Mammary epithelial cell (primary cell): ENCODE measurements at regions of chr5 and their contacts with region 1.

Region 1: DNA sequence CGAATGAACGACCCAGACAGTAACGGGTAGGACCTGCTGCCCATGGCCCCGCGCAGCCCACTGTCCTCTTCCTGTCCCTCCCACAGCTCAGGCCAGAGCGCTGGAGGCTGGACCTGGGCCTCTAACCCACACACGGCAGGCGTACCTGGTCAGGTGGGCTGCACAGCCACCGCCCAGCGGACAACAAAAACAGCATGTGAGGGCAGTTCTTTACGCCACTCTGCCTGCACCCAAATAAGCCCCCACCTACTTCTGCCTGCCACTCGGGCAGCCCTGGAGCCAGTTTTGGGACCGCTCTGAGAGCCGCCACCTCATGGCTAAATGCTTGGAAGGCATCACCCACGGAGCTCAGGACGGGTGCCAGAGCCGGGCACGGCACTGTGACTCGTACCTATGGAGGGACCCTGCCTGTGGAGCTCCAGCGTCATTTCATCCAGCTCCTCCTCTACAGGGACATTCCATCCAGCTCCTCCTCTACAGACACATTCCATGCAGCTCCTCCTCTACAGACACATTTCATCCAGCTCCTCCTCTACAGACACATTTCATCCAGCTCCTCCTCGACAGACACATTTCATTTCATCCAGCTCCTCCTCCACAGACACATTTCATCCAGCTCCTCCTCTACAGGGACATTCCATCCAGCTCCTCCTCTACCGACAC is 18.9 kb downstream of the CLPTM1L start:
- DNase-seq: no peak
- H3K4me3 ChIP-seq: no peak overlapping the region
- H3K27ac ChIP-seq: no peak overlapping the region
- H3K4me1 ChIP-seq: peaks cover 42% of the 10 kb centered on the region
- H3K27me3 ChIP-seq: no peaks in the 10 kb centered on the region
- CTCF ChIP-seq: no peak

Region 2: DNA sequence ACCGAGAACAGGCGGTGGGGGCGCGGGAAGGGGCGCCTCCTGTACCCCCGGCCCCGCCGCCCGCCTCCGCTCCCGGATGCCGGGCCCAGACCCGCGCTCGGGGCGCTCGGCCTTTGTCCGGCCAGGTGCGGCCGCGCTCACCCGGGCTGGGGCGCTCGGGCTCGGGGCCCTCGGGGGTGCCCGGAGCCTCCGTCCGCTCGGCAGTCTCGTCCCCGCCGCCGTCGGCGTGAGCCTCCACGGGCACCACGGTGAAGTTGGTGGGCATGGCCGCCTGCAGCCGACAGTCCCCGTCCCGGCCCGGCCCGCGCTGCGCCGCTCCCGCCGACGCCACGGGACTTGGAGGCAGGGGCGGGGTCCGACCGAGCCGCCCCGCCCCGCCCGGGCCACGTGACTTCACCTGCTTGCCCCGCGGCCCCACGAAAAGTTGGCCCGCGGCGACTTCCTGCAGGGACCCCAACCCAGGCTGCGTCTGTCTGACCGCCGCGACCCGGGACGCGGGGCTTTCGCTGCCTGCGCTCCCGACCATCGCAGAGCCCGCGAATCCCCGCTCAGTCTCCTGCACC is 214.2 kb before region 1 on chr5 and contains the start of gene SLC12A7:
- CTCF ChIA-PET with region 1: no interaction called
- dilution Hi-C with region 1: no loop called
- in situ Hi-C with region 1: no loop called
- intact Hi-C with region 1: loop called (anchors 5 kb)
- DNase-seq: peak; percentile 35
- H3K4me3 ChIP-seq: peak within 1 kb of the TSS; percentile 71 to 88 (median 71)
- H3K27ac ChIP-seq: peak within 1 kb of the TSS; percentile 36
- H3K4me1 ChIP-seq: peaks cover 13% of the 10 kb centered on the region
- H3K27me3 ChIP-seq: no peaks in the 10 kb centered on the region
- CTCF ChIP-seq: no peak
- total RNA-seq, gene SLC12A7: 10.5 to 21.2 TPM

Region 3: GRCh38 chr5:1344975-1345838 is 19.2 kb after region 1 on chr5 and contains the start of gene CLPTM1L:
- CTCF ChIA-PET with region 1: no interaction called
- dilution Hi-C with region 1: no loop called
- in situ Hi-C with region 1: no loop called
- intact Hi-C with region 1: loop called (anchors 2 kb)
- DNase-seq: peak; percentile 81
- H3K4me3 ChIP-seq: peak within 1 kb of the TSS; percentile 80 to 91 (median 87)
- H3K27ac ChIP-seq: peak within 1 kb of the TSS; percentile 78
- H3K4me1 ChIP-seq: peaks cover 18% of the 10 kb centered on the region
- H3K27me3 ChIP-seq: no peaks in the 10 kb centered on the region
- CTCF ChIP-seq: no peak
- total RNA-seq, gene CLPTM1L: 111 to 154 TPM

Region 4: GRCh38 chr5:1385395-1386273 is 59.6 kb after region 1 on chr5:
- CTCF ChIA-PET with region 1: no interaction called
- dilution Hi-C with region 1: no loop called
- in situ Hi-C with region 1: no loop called
- intact Hi-C with region 1: no loop called
- DNase-seq: peak; percentile 33
- H3K4me3 ChIP-seq: peak overlapping the region; percentile 53 to 60 (median 57)
- H3K27ac ChIP-seq: no peak overlapping the region
- H3K4me1 ChIP-seq: peaks cover 14% of the 10 kb centered on the region
- H3K27me3 ChIP-seq: no peaks in the 10 kb centered on the region
- CTCF ChIP-seq: no peak

Region 5: GRCh38 chr5:1511651-1512540 is 185.9 kb after region 1 on chr5:
- CTCF ChIA-PET with region 1: no interaction called
- dilution Hi-C with region 1: no loop called
- in situ Hi-C with region 1: no loop called
- intact Hi-C with region 1: no loop called
- DNase-seq: peak; percentile 47
- H3K4me3 ChIP-seq: no peak overlapping the region
- H3K27ac ChIP-seq: no peak overlapping the region
- H3K4me1 ChIP-seq: peaks cover 22% of the 10 kb centered on the region
- H3K27me3 ChIP-seq: no peaks in the 10 kb centered on the region
- CTCF ChIP-seq: peak in 1 of 2 donors; percentile 44

Region 6: DNA sequence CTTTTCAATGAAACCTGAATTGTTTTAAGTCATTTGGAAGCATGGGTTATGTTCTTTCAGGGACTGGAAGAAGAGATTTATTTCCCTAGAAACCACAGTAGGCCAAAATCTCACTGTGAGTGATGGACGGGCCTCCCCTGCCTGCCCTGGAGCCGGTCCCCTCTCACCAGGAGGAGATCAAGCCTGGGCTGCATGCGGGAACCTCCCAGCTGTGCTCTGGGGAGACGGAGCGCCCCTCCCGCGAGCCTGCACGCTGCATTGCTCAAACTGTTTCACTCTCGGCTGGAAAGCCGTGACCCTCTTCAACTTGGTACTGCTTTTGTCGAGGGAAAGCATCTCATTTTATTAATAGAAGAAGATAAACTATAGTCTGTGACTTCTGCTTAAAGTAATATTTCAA is 1340.1 kb after region 1 on chr5:
- CTCF ChIA-PET with region 1: no interaction called
- dilution Hi-C with region 1: no loop called
- in situ Hi-C with region 1: no loop called
- intact Hi-C with region 1: no loop called
- DNase-seq: no peak
- H3K4me3 ChIP-seq: no peak overlapping the region
- H3K27ac ChIP-seq: no peak overlapping the region
- H3K4me1 ChIP-seq: no peaks in the 10 kb centered on the region
- H3K27me3 ChIP-seq: no peaks in the 10 kb centered on the region
- CTCF ChIP-seq: no peak